ENCODE measurements at regions of chr1 and their contacts with region 1.

Region 1: DNA sequence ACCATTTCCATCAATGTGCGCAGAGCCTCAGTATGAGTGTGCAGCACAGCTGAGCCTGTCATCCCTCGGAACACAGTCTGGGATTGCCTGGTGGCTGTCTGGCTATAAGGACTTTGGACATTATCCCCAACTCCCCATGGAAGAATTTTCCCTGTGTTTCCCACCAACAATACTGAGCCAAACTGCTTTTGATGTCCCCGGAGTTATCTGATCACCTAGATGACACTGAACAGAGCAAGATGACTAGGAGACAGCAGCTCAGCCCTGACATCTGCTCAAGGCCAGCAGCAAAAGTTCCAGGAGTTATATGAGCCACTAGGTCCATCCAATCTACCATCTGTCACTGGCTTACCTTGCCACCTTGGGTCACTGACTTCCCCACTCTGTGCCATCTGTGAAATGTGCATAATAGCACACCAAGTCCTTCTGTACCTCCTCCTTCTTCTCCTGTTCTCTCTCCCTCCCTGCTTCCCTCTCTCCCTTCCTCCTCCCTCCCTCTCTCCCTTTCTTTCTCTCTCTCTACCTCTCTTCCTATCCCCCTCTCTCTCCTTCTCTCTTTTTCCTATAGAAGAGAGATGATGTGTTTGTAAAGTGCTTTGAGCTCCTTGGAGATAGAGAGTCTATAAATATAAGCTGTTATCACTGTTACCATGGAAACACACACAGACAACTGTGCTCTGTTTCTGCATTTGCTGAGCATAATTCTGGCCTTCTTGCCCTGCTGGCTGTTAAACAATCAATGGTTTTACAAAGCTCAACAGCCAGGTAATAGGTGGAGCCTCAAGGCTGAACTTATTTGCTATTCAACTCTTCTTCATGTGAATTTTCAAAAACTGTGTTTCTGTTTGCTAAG is 19.7 kb upstream of the ATP1B1 start:
- DNase-seq: no peak
- ATAC-seq: peak; percentile 13
- H3K4me3 Mint-ChIP-seq: no peak overlapping the region
- H3K27ac Mint-ChIP-seq: no peak overlapping the region
- H3K4me1 Mint-ChIP-seq: peaks cover 15% of the 10 kb centered on the region
- H3K27me3 Mint-ChIP-seq: peaks cover 2% of the 10 kb centered on the region

Region 2: DNA sequence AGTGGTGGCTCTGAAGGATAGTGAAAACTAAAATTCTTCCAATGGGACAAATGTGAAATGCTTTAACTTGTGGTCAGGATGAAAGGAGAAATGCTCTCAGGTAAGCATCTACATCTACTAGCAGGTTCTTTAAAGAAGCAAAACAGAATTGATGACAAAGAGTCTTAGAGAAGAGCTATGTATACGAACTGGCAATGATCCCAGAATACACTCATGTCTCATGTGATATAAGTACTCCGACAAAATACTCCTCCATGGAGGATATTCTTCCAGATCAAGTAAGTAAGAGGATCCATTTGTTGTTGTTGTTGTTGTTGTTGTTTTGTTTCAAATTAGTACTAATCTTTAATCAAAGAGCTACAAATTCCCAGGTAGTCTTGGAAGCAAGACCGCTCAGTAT is 154.3 kb before region 1 on chr1:
- CTCF ChIA-PET with region 1: no interaction called
- POLR2A ChIA-PET with region 1: no interaction called
- intact Hi-C with region 1: loop called in 1 of 2 experiments (anchors 5 kb)
- DNase-seq: no peak
- ATAC-seq: no peak
- H3K4me3 Mint-ChIP-seq: no peak overlapping the region
- H3K27ac Mint-ChIP-seq: no peak overlapping the region
- H3K4me1 Mint-ChIP-seq: no peaks in the 10 kb centered on the region
- H3K27me3 Mint-ChIP-seq: peaks cover 18% of the 10 kb centered on the region

Region 3: GRCh38 chr1:169491845-169492281 is 405.0 kb after region 1 on chr1:
- CTCF ChIA-PET with region 1: no interaction called
- POLR2A ChIA-PET with region 1: no interaction called
- intact Hi-C with region 1: no loop called
- DNase-seq: peak; percentile 79
- ATAC-seq: peak; percentile 91
- H3K4me3 Mint-ChIP-seq: no peak overlapping the region
- H3K27ac Mint-ChIP-seq: peak overlapping the region; percentile 57
- H3K4me1 Mint-ChIP-seq: peaks cover 47% of the 10 kb centered on the region
- H3K27me3 Mint-ChIP-seq: peaks cover 5% of the 10 kb centered on the region

Region 4: DNA sequence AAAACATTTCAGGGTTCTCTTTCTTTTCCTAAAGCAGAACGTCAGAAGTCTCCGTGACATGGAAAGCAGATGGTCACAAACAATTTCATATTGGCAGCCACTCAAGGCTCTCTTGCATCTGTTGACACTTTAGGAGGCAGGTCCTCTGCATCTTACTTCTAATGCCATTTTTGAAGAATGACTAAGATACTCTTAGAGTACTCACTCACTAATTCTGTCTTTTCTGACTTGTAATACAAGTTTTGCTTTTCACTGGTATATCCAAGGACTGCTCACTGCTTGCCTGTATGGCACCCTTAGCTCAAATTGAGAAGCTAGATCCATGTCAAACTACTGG is 1645.4 kb after region 1 on chr1:
- CTCF ChIA-PET with region 1: no interaction called
- POLR2A ChIA-PET with region 1: no interaction called
- intact Hi-C with region 1: no loop called
- DNase-seq: no peak
- ATAC-seq: no peak
- H3K4me3 Mint-ChIP-seq: no peak overlapping the region
- H3K27ac Mint-ChIP-seq: no peak overlapping the region
- H3K4me1 Mint-ChIP-seq: no peaks in the 10 kb centered on the region
- H3K27me3 Mint-ChIP-seq: peaks cover 8% of the 10 kb centered on the region